Left ventricle myocardium inferior (tissue), 1 donor: ENCODE measurements at regions of chr10 and their contacts with region 1.

Region 1: DNA sequence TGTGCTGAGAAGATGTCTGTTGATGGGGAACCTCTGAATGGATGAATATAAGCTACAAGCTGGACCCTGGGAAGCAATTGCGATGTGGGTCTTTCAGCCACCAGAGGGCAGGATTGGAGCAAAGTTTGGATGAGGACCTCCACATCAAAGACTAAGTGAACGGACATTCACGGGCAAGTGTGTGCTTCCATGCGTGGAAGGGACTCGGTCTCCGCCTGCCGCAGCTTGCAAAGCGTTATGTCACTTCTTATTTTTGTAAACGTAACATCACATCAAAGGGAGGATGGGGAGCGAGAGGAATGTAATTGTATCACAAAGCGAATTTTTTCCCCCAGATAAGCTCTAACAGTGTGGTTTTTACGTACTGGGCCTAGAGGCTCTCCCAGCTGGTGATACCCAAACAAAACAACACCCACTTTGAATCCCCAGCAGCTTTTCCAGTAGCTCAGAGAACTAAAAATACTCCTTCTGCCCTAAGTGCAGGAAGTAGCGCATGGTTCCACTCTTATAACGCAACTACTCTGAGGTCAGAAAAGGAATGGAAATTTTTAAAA is 65.0 kb downstream of the VWA2 start:
- DNase-seq: peak; percentile 81
- H3K4me3 ChIP-seq: peak overlapping the region; percentile 54
- H3K27ac ChIP-seq: peak overlapping the region; percentile 45
- H3K4me1 ChIP-seq: peaks cover 44% of the 10 kb centered on the region
- H3K27me3 ChIP-seq: no peaks in the 10 kb centered on the region
- CTCF ChIP-seq: peak; percentile 83

Region 2: GRCh38 chr10:114437456-114438292 is 133.6 kb after region 1 on chr10:
- intact Hi-C with region 1: loop called (anchors 5 kb)
- DNase-seq: no peak
- H3K4me3 ChIP-seq: no peak overlapping the region
- H3K27ac ChIP-seq: no peak overlapping the region
- H3K4me1 ChIP-seq: no peaks in the 10 kb centered on the region
- H3K27me3 ChIP-seq: no peaks in the 10 kb centered on the region
- CTCF ChIP-seq: peak; percentile 48

Region 3: DNA sequence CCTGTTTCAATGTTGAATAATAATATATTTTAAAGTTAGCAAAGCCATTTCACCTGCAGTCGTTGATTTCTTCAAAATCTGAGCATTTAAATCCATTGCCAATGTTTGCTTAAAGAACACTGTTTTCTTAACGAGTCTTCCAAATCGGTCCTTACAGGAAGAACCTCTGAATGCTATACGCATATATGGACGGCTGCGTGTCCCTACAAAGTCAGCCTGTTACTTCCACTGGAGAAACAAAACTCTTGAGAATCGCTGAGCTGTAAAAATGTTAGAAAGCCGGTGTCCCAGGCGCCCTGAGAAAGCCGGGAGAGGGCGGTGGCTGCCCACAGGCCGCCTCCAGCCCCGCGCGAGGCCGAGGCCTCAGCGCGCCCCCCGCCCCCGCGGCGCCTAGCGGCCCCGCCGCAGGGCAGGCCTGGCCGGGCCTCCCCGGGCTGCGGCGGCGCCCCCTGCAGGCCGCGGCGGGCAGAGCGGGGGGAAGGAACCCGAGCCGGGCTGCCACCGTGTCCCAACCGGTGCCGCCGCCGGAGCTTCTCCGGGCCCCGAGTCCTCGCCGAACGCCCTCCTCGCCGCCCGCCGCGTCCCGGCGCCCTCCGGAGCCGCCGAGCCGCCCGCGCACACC is 517.3 kb after region 1 on chr10 and contains the start of gene FHIP2A:
- intact Hi-C with region 1: loop called (anchors 5 kb)
- DNase-seq: peak; percentile 82
- H3K4me3 ChIP-seq: peak within 1 kb of the TSS; percentile 85
- H3K27ac ChIP-seq: peak within 1 kb of the TSS; percentile 97
- H3K4me1 ChIP-seq: peaks cover 41% of the 10 kb centered on the region
- H3K27me3 ChIP-seq: no peaks in the 10 kb centered on the region
- CTCF ChIP-seq: peak; percentile 73
- total RNA-seq, gene FHIP2A: 26.6 TPM